Endothelial cell of umbilical vein (primary cell): ENCODE measurements at regions of chr4 and their contacts with region 1.

Region 1: DNA sequence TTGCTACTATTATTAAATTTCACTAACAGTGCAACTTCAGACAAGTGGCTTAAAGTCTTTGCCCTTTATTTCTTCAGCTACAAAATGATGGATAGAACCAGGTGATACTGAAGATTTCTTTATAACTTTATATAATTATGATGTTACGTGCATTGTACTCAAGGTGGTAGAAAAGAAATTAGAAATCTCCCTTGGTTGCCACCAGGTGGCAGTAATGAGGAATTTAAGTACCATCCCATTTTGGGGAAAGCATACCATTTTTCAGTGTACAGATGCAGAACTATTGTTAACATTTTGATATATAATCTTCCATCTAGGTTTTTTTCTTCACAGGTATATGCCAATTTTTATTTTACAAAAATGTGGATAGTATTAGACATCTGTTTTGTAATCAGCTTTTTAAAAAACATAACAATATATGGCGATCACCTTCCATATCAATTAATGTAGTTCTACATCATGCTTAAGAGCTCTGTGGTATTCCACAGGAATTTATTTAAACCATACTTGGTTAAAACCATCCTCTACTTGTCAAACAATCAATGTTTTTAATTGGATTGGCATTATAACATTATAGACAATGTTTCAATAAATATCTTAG is 37.7 kb upstream of the RAB33B start:
- DNase-seq: peak; percentile 58
- H3K4me3 ChIP-seq: no peak overlapping the region
- H3K27ac ChIP-seq: no peak overlapping the region
- H3K4me1 ChIP-seq: peaks cover 40% of the 10 kb centered on the region
- H3K27me3 ChIP-seq: no peaks in the 10 kb centered on the region
- CTCF ChIP-seq: peak; percentile 35 to 42
- POLR2A ChIP-seq: no peak

Region 2: DNA sequence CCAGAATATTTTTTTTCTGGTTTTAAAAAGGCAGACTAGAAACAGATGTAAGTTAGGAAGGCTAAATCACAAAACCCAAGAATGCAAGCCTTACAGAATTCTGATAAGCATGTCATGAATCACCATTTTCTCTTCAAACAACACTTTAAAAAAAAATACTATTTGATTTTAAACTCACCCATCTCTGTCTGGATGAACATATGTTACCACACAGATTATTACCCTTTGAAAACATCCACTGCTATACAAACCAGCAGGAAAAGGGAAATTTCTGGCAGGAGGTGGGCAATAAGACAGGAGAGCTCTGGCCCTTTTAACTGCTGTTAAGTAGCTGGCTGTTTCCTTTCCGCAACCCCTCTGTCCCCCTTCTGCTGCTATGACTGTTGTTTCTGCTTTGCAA is 718.3 kb before region 1 on chr4:
- CTCF ChIA-PET with region 1: no interaction called
- POLR2A ChIA-PET with region 1: no interaction called
- dilution Hi-C with region 1: no loop called
- intact Hi-C with region 1: no loop called
- DNase-seq: no peak
- H3K4me3 ChIP-seq: no peak overlapping the region
- H3K27ac ChIP-seq: no peak overlapping the region
- H3K4me1 ChIP-seq: no peaks in the 10 kb centered on the region
- H3K27me3 ChIP-seq: peaks cover 4 to 11% of the 10 kb centered on the region in 2 experiments
- CTCF ChIP-seq: no peak
- POLR2A ChIP-seq: no peak

Region 3: GRCh38 chr4:139083956-139084803 is 332.0 kb before region 1 on chr4:
- CTCF ChIA-PET with region 1: no interaction called
- POLR2A ChIA-PET with region 1: no interaction called
- dilution Hi-C with region 1: no loop called
- intact Hi-C with region 1: no loop called
- DNase-seq: peak; percentile 91
- H3K4me3 ChIP-seq: peak overlapping the region; percentile 65 to 100 (median 92)
- H3K27ac ChIP-seq: peak overlapping the region; percentile 85
- H3K4me1 ChIP-seq: peaks cover 19% of the 10 kb centered on the region
- H3K27me3 ChIP-seq: no peaks in the 10 kb centered on the region
- CTCF ChIP-seq: peak in 1 of 2 donors; percentile 32
- POLR2A ChIP-seq: peak; percentile 36

Region 4: GRCh38 chr4:139241086-139241783 is 174.9 kb before region 1 on chr4:
- CTCF ChIA-PET with region 1: no interaction called
- POLR2A ChIA-PET with region 1: no interaction called
- dilution Hi-C with region 1: no loop called
- intact Hi-C with region 1: no loop called
- DNase-seq: no peak
- H3K4me3 ChIP-seq: no peak overlapping the region
- H3K27ac ChIP-seq: no peak overlapping the region
- H3K4me1 ChIP-seq: peaks cover 6% of the 10 kb centered on the region
- H3K27me3 ChIP-seq: no peaks in the 10 kb centered on the region
- CTCF ChIP-seq: no peak
- POLR2A ChIP-seq: no peak

Region 5: GRCh38 chr4:139392797-139393196 is 23.4 kb before region 1 on chr4:
- CTCF ChIA-PET with region 1: no interaction called
- POLR2A ChIA-PET with region 1: no interaction called
- dilution Hi-C with region 1: no loop called
- intact Hi-C with region 1: no loop called
- DNase-seq: no peak
- H3K4me3 ChIP-seq: no peak overlapping the region
- H3K27ac ChIP-seq: no peak overlapping the region
- H3K4me1 ChIP-seq: no peaks in the 10 kb centered on the region
- H3K27me3 ChIP-seq: no peaks in the 10 kb centered on the region
- CTCF ChIP-seq: no peak
- POLR2A ChIP-seq: no peak

Region 6: GRCh38 chr4:139453371-139454110 is 37.4 kb after region 1 on chr4:
- CTCF ChIA-PET with region 1: interaction called, 31 read pairs
- POLR2A ChIA-PET with region 1: interaction called, 23 read pairs
- dilution Hi-C with region 1: no loop called
- intact Hi-C with region 1: loop called (anchors 1 kb)
- DNase-seq: peak; percentile 98
- H3K4me3 ChIP-seq: peak overlapping the region; percentile 91 to 99 (median 97)
- H3K27ac ChIP-seq: peak overlapping the region; percentile 89
- H3K4me1 ChIP-seq: peaks cover 45% of the 10 kb centered on the region
- H3K27me3 ChIP-seq: no peaks in the 10 kb centered on the region
- CTCF ChIP-seq: peak in 1 of 2 donors; percentile 4
- POLR2A ChIP-seq: peak; percentile 89

Region 7: DNA sequence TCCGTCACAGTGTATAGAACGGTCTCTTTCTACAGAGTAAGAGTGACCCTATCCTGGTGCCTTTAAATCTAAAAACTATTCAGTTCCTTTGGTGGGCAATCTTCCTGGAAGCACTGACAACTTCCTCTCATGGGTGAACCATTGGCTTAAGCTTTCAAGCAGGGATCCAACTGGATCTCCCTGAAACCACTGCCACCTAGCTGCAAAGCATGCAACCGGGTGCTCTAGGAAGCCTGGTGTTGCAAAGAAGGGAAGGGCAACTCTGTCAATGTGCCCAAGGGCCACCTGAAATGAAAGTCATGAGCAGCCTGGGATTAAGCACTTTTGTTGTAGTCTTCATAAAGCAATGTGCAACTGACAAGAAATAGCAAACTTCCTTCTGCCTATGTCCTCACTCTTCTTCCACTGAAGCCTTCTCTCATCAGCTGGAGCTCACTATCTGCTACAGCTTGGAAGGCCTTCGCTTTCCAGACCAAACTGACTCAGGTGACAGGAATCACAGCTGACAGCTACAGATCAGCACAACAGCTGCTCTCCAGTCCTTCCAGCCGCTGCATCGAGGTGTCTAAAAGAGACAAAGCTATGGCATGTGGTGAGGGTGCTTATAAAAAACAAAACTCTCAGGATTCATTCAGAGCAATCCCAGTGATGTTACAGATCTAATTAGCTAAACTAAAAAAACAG is 93.7 kb after region 1 on chr4:
- CTCF ChIA-PET with region 1: interaction called, 13 read pairs
- POLR2A ChIA-PET with region 1: no interaction called
- dilution Hi-C with region 1: no loop called
- intact Hi-C with region 1: loop called (anchors 1 kb)
- DNase-seq: peak; percentile 45
- H3K4me3 ChIP-seq: no peak overlapping the region
- H3K27ac ChIP-seq: no peak overlapping the region
- H3K4me1 ChIP-seq: peaks cover 7% of the 10 kb centered on the region
- H3K27me3 ChIP-seq: no peaks in the 10 kb centered on the region
- CTCF ChIP-seq: peak; percentile 16 to 38
- POLR2A ChIP-seq: no peak

Region 8: DNA sequence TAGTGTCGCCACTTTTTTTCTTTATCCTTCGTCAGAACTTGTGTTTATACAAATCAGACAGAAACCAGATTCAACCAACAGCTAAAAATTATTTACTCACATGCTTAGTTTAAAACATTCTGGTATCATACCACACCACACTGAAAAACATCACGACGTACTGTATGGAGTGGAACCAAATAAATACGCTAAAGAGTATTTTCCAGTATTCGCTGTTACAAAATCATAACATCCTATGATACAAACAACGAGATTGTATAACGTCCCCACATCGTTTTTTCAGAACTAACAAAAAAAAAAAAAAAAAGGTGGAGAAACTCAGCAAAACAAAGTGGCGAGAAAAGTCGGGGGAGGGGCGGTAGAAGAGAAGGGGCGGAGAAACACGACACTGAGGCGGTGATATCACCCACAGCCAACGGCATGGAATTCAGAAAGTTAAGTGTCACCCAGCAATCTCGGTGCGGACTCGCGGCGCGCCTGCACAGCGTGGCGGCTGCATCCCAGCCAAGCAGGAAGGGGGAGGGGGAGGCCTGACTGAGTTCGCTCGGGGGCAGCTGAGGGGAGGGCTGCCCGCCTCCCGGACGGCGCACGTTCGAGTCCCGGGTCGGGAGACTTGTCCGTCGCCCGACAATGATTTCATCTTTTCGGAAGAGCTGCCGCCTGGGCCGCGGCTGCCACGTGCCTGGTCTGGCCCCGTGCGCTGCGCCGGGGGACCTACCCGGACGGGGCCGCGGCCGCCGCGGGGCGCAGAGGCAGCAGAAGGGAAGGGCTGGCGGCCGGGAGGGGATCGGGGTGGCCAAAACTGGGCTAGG is 138.9 kb after region 1 on chr4:
- CTCF ChIA-PET with region 1: interaction called, 3 read pairs
- POLR2A ChIA-PET with region 1: no interaction called
- dilution Hi-C with region 1: no loop called
- intact Hi-C with region 1: loop called (anchors 2 kb)
- DNase-seq: peak; percentile 96
- H3K4me3 ChIP-seq: peak overlapping the region; percentile 65 to 91 (median 89)
- H3K27ac ChIP-seq: peak overlapping the region; percentile 77
- H3K4me1 ChIP-seq: peaks cover 20% of the 10 kb centered on the region
- H3K27me3 ChIP-seq: peaks cover 15 to 23% of the 10 kb centered on the region in 2 experiments
- CTCF ChIP-seq: no peak
- POLR2A ChIP-seq: peak; percentile 78

Region 9: DNA sequence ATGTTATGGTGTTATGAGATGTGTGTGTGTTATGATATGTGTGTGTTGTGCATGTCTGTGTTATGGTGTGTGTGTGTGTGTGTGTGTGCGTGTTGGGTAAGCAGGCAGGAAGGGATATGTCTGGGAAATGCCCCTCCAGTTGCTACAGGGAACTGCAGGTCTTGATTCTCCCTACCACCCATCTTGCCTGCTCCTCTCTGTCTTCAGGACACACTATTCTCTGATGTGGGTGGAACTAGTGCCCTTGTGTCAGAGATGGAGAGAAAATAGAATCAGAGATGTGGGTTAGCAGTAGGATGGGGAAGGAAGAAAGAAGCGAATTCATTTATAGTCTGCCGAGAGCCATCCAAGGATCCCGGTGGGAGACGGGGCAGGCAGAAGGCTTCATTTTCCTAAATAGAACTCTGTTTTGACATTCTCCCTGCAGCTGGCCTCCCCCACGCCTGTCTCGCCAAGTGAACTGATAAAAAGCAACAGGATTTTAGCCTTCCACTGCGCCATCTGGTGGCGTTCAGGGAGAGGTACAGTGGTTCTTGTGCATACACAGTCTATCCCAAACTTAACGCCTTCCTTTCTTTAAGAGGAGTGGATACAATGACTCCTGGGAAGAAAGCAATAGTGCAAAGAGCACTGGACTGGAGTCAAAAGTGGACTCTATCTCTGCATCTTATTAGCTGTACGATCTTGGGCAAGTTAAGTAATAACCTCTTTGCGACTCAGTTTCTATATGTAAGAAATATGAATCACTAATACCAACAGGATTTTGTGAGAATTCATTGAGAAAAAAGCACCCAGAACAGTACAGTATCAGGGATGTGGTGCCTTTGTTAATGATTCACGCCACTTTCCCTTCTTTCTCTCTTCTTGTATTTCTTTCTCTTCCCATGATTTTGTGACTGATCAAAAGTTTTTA is 235.4 kb after region 1 on chr4:
- CTCF ChIA-PET with region 1: no interaction called
- POLR2A ChIA-PET with region 1: no interaction called
- dilution Hi-C with region 1: no loop called
- intact Hi-C with region 1: loop called (anchors 5 kb)
- DNase-seq: peak; percentile 82
- H3K4me3 ChIP-seq: no peak overlapping the region
- H3K27ac ChIP-seq: no peak overlapping the region
- H3K4me1 ChIP-seq: no peaks in the 10 kb centered on the region
- H3K27me3 ChIP-seq: no peaks in the 10 kb centered on the region
- CTCF ChIP-seq: peak; percentile 85 to 88
- POLR2A ChIP-seq: no peak